Ascending aorta (tissue), 2 donors: ENCODE measurements at regions of chr20 and their contacts with region 1.

Region 1: DNA sequence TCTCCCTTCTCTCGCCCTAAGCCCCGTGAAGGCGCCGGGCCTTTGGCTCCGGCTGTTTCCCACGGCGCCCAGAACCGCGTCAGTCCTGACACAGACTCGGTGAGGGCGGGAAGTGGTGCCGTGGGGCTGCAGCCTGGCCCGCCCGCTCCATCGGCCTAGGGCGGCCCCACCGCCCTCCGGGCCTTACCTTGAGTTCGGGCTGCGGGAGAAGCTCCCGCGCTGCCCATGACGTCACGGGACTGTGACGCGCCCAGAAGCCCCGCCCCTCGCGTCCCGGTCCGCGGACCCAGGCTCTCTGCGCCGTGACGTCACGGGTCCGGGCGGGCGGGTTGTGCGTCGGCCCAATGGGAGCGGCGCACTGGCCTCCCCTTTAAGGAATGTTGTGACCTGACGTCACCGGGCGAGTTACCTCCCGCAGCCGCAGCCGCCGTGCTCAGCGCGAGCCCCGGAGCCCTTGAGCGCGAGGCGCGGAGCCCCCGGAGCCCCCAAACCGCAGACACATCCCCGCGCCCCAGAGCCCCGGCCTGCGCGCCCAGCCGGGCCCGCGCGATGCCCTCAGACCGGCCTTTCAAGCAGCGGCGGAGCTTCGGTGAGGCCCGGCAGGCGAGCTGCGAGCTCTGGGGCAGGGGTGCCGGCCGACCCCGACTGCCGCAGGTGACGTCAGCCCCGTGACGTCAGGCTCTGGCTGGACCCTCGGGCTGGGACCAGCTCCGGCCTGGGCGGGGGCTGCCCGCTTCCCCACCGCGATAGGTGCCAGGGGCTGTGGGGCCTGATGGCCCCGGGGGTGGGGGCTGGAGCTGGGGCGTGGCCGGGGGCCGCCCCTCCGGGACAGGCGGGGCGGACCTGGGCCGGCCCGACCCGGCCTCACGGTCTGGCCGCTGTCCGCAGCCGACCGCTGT is at the start of gene MAP1LC3A:
- DNase-seq: peak; percentile 91 to 98
- H3K4me3 ChIP-seq: peak within 1 kb of the TSS; percentile 92 to 95
- H3K27ac ChIP-seq: peak within 1 kb of the TSS; percentile 99 to 100
- H3K4me1 ChIP-seq: peaks cover 7% of the 10 kb centered on the region in 2 donors
- H3K27me3 ChIP-seq: no peaks in the 10 kb centered on the region
- CTCF ChIP-seq: no peak
- total RNA-seq, gene MAP1LC3A: 131 TPM

Region 2: GRCh38 chr20:34302723-34303528 is 255.6 kb before region 1 on chr20 and contains the start of gene AHCY:
- intact Hi-C with region 1: loop called (anchors 2 kb)
- DNase-seq: peak; percentile 88 to 98
- H3K4me3 ChIP-seq: peak within 1 kb of the TSS; percentile 60 to 90
- H3K27ac ChIP-seq: peak within 1 kb of the TSS; percentile 94 to 95
- H3K4me1 ChIP-seq: peaks cover 0 to 6% of the 10 kb centered on the region in 2 donors
- H3K27me3 ChIP-seq: no peaks in the 10 kb centered on the region
- CTCF ChIP-seq: peak in 1 of 3 experiments; percentile 28
- total RNA-seq, gene AHCY: 93.8 TPM

Region 3: DNA sequence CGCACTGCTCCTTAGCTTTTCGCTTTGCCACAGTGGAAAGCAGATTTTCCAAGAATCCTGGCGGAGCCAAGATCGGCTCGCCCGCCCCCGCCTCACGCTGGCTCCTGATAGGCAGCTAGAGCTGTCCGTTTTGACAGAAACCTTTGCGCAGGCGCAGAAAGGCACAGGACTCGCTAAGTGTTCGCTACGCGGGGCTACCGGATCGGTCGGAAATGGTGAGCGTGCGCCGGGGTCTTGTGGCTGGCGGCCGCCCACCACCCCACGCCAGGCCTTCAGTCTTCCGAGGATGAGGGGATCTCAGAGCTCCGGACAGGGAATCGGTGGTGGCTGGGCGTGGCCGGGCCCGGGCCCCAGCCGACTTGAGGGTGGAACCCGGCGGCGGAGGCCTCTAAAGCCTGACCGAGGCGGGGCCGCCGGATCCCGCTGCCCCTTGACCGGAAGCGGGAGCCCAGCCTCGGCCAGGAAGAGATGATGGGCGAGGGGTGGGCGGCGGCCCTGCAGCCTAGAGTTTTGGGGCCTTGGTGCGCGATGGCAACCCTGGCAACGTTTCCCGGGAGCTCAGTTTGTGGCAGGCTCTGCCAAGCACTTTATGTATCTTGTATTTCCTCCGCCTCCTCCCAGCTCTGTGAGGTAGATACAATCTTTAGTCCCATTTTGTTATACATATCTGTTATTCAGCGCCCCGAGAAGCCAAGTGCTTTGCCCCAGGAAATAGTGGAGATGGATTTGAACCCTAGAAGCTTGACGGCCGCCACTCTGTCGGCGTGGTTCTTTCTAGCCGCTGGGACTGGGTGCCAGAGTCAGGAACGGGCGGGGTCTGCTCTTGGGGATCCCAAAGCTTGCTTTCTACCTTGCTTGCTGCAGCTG is 42.1 kb before region 1 on chr20 and contains the start of gene DYNLRB1:
- intact Hi-C with region 1: loop called (anchors 2 kb)
- DNase-seq: peak; percentile 82 to 98
- H3K4me3 ChIP-seq: peak within 1 kb of the TSS; percentile 78 to 80
- H3K27ac ChIP-seq: peak within 1 kb of the TSS; percentile 89 to 97
- H3K4me1 ChIP-seq: peaks cover 0 to 27% of the 10 kb centered on the region in 2 donors
- H3K27me3 ChIP-seq: no peaks in the 10 kb centered on the region
- CTCF ChIP-seq: no peak
- total RNA-seq, gene DYNLRB1: 148 TPM

Region 4: GRCh38 chr20:34676642-34677373 is 118.2 kb after region 1 on chr20 and contains the start of gene PIGU:
- intact Hi-C with region 1: loop called (anchors 1 kb)
- DNase-seq: peak; percentile 81 to 97
- H3K4me3 ChIP-seq: peak within 1 kb of the TSS; percentile 65 to 98
- H3K27ac ChIP-seq: peak within 1 kb of the TSS; percentile 64 to 74
- H3K4me1 ChIP-seq: peaks cover 0 to 2% of the 10 kb centered on the region in 2 donors
- H3K27me3 ChIP-seq: no peaks in the 10 kb centered on the region
- CTCF ChIP-seq: peak; percentile 33 to 37 (median 34)
- total RNA-seq, gene PIGU: 41.5 TPM